Cardiac septum (tissue), 1 donor: ENCODE measurements at regions of chr13 and their contacts with region 1.

Region 1: DNA sequence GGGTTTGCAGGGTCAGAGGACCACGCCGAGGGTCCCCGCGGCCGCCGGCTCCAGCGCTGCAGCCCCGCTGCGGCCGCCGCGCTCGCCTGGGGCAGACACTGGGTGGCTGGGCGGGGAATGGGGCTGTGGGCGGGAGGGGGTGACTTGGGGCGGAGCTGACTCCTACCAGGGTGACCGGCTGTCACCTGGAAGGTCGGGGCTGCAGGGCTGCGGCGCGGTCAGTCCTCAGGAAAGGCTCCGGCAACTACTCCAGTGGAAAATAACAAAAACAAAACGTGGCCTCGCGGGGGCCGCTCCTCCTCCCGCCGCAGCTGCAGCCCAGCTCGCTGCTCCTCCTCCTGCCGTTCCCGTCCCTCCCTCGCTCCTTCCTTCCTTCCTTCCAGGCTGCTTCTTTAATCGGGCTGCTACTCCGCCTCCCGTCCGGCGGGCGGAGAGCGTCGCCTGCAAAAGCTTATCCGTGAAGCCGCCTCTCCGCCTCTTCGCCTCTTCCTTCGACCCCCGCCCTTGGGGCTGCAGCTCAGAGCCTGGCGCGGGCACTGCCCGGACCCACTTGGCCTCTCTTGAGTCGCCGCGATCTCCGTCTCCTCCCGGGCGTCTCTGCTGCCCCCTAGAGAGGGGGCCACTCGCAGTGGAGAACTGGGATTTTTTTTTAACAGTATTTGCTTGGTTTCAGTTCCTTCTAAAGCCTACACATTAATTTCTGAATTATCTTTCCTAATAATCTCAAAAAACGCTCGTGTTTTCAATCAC is at the start of gene TBC1D4:
- DNase-seq: peak; percentile 93
- total RNA-seq, gene TBC1D4: 84.9 TPM

Region 2: GRCh38 chr13:75299913-75300862 is 182.1 kb before region 1 on chr13:
- intact Hi-C with region 1: loop called (anchors 10 kb)
- DNase-seq: no peak

Region 3: DNA sequence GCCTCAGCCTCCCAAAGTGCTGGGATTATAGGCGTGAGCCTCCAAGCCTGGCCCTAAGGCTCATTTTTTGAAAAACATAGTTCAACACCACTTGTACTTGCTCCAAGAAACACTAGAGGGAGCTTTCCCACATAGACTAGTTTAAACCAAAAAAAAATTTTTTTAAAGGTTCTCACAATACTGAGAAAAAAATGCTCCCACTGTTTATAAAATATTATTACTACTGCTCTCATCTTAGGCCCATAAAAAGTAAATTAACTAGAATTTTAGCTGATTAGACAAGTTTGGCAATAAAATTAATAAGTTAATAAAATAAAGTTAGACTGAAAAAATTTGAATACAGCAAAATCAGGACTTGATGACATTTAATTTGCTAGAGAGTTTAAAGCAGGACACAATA is 109.7 kb before region 1 on chr13:
- intact Hi-C with region 1: loop called (anchors 2 kb)
- DNase-seq: no peak

Region 4: DNA sequence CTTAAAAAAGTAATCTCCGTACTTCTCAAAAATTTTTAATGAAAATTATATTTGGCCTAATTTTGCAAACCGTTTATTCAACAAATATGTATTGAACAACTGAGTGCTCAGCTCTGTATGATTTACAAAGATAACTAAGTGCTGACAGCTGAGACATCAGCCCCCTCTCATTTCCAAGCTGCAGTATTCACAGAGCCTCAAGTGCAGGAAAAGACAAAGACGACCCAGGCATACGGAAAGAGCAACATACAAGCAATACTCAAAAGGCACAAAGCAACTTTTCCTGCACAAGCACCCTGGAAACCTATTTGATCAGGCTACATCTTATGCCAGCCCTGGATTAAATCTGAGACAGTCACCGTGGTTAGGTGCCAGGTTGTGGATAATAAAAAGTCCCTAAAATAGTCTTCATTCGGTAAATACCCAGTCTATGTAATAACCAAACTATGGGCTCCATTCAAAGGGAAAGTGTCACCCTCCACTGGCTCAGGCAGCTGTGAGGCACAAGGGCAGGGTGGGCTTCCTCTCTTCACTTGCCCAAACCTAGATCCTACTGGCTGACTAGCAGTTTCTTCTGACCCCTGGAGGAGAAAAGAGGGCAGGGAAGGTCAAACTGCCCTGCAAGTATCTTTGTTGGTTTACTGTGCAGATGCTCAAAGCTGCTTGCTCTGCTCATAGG is 65.8 kb before region 1 on chr13:
- intact Hi-C with region 1: loop called (anchors 5 kb)
- DNase-seq: no peak

Region 5: GRCh38 chr13:75432045-75432444 is 50.2 kb before region 1 on chr13:
- intact Hi-C with region 1: loop called (anchors 5 kb)
- DNase-seq: no peak

Region 6: DNA sequence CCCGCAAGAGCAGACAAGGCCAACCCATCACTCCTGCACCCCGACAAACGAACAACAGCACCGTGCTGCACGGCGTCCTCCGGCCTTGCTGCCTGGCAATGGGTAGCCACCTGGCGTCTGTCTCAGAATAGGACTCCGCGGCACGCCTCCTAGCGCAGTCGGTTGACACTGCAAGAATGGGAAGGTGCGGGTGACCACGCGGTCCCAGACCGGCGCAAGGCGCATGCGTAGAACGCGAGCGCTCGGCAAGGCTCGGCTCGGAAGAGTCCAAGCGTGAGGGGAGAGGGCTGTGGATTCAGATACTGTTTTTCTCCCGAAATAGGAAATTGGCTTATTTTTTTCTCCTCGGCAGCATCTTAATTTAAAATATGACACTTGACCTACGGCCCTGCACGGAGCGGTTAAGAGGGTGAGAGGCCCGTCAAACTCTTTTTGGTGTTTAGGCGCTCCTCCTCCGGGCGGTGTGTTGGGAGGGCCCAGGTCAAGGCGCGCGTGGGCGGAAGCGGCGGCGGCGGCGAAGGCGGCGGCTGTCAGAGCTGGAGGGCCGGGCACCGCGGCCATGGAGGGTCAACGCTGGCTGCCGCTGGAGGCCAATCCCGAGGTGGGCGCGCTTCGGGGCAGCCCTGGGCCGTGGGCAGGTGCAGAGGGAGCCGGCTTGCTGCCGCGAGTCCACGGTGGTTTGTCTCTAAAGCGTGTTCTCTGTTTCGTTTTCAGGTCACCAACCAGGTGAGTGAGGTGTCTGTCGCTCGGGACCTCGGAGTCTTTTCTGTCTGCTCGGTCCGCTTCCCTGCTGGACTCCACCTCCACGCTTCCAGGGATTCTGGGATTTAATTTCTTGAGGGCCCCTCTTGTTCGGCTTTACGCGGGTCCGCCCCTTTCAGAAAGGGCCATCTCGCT is 67.3 kb after region 1 on chr13 and contains the start of gene UCHL3:
- intact Hi-C with region 1: loop called (anchors 2 kb)
- DNase-seq: peak; percentile 98
- total RNA-seq, gene UCHL3: 22.9 TPM